CD4-positive, alpha-beta T cell (primary cell): ENCODE measurements at regions of chr4 and their contacts with region 1.

Region 1: GRCh38 chr4:145819853-145820181 is 118.8 kb downstream of the ZNF827 start:
- DNase-seq: no peak
- ATAC-seq: no peak
- H3K4me3 ChIP-seq: no peak overlapping the region
- H3K4me3 Mint-ChIP-seq: no peak overlapping the region
- H3K27ac ChIP-seq: no peak overlapping the region
- H3K27ac Mint-ChIP-seq: no peak overlapping the region
- H3K4me1 ChIP-seq: no peaks in the 10 kb centered on the region
- H3K4me1 Mint-ChIP-seq: no peaks in the 10 kb centered on the region
- H3K27me3 ChIP-seq: no peaks in the 10 kb centered on the region
- H3K27me3 Mint-ChIP-seq: no peaks in the 10 kb centered on the region
- CTCF ChIP-seq: no peak

Region 2: DNA sequence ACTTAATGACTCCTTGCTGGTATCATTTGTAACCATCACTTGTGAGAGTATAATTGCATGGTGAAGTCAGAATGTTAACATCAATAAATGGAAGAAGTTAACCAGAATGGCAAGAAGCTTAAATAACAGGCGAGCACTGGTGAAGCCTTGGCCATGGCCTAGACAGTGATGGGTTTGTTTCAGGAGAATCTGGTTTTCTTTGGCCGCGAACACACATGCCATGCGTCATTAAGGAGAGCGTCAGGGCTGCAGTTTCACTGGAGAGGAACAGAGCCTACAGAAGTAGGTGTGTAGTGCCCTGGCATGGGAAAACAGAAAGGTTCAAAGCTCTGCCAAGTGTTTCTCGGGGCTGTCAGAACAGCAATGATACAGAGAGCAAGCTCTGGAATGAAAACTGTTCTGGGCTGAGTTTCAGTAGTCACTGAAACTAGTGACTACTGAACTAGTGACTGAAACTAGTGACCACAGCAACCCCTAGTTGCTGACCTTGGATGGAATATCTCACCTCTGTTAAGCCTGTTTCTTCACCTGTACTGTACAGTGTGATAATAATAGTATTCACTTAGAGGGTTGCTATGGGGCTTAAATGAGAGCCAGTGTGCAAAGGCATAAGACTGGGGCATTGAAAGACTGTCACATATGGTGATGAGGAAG is 46.1 kb before region 1 on chr4:
- CTCF ChIA-PET with region 1: no interaction called
- POLR2A ChIA-PET with region 1: no interaction called
- intact Hi-C with region 1: loop called in 1 of 2 experiments (anchors 5 kb)
- DNase-seq: no peak
- ATAC-seq: no peak
- H3K4me3 ChIP-seq: no peak overlapping the region
- H3K4me3 Mint-ChIP-seq: no peak overlapping the region
- H3K27ac ChIP-seq: no peak overlapping the region
- H3K27ac Mint-ChIP-seq: no peak overlapping the region
- H3K4me1 ChIP-seq: no peaks in the 10 kb centered on the region
- H3K4me1 Mint-ChIP-seq: no peaks in the 10 kb centered on the region
- H3K27me3 ChIP-seq: no peaks in the 10 kb centered on the region
- H3K27me3 Mint-ChIP-seq: no peaks in the 10 kb centered on the region
- CTCF ChIP-seq: no peak

Region 3: GRCh38 chr4:145861336-145862318 is 41.8 kb after region 1 on chr4:
- CTCF ChIA-PET with region 1: no interaction called
- POLR2A ChIA-PET with region 1: no interaction called
- intact Hi-C with region 1: no loop called
- DNase-seq: no peak
- ATAC-seq: no peak
- H3K4me3 ChIP-seq: no peak overlapping the region
- H3K4me3 Mint-ChIP-seq: no peak overlapping the region
- H3K27ac ChIP-seq: no peak overlapping the region
- H3K27ac Mint-ChIP-seq: no peak overlapping the region
- H3K4me1 ChIP-seq: no peaks in the 10 kb centered on the region
- H3K4me1 Mint-ChIP-seq: no peaks in the 10 kb centered on the region
- H3K27me3 ChIP-seq: no peaks in the 10 kb centered on the region
- H3K27me3 Mint-ChIP-seq: no peaks in the 10 kb centered on the region
- CTCF ChIP-seq: no peak